ENCODE measurements at regions of chr14 and their contacts with region 1.

Region 1: GRCh38 chr14:55270832-55271565 is at the start of gene FBXO34:
- DNase-seq: peak; percentile 90
- H3K4me3 ChIP-seq: peak within 1 kb of the TSS; percentile 95
- H3K27ac ChIP-seq: peak within 1 kb of the TSS; percentile 71
- H3K27me3 ChIP-seq: no peaks in the 10 kb centered on the region
- CTCF ChIP-seq: peak; percentile 99
- polyA plus RNA-seq, gene FBXO34: 26.8 and 30.9 TPM in 2 replicates

Region 2: GRCh38 chr14:55212634-55213033 is 58.4 kb before region 1 on chr14:
- CTCF ChIA-PET with region 1: interaction called, 10 read pairs
- POLR2A ChIA-PET with region 1: no interaction called
- DNase-seq: no peak
- H3K4me3 ChIP-seq: no peak overlapping the region
- H3K27ac ChIP-seq: no peak overlapping the region
- H3K27me3 ChIP-seq: no peaks in the 10 kb centered on the region
- CTCF ChIP-seq: no peak

Region 3: DNA sequence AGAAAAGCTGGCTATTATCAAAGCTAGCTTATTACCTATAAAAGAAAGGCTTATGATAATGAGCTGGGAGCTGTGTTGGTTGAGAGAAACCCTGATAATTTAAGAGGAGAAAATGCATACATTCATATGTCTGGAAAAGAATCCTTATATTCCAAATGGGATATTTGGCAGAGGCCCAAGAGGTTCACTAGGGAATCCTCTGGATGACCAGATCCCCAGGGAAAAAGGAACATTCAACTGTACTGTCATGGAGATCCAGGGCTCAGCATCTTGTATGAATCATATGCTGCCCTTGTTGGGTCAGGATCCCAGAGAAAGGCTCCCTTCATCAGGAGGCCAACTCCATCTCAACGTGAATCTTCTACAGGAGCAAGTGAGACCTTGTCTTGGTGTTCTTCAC is 16.4 kb before region 1 on chr14:
- CTCF ChIA-PET with region 1: interaction called, 15 read pairs
- POLR2A ChIA-PET with region 1: no interaction called
- DNase-seq: no peak
- H3K4me3 ChIP-seq: no peak overlapping the region
- H3K27ac ChIP-seq: no peak overlapping the region
- H3K27me3 ChIP-seq: peaks cover 21% of the 10 kb centered on the region
- CTCF ChIP-seq: no peak

Region 4: GRCh38 chr14:55366271-55366670 is 95.3 kb after region 1 on chr14:
- CTCF ChIA-PET with region 1: interaction called, 13 read pairs
- POLR2A ChIA-PET with region 1: no interaction called
- DNase-seq: peak; percentile 43
- H3K4me3 ChIP-seq: no peak overlapping the region
- H3K27ac ChIP-seq: peak overlapping the region; percentile 71
- H3K27me3 ChIP-seq: no peaks in the 10 kb centered on the region
- CTCF ChIP-seq: no peak

Region 5: GRCh38 chr14:55418411-55418810 is 147.4 kb after region 1 on chr14:
- CTCF ChIA-PET with region 1: interaction called, 18 read pairs
- POLR2A ChIA-PET with region 1: no interaction called
- DNase-seq: no peak
- H3K4me3 ChIP-seq: no peak overlapping the region
- H3K27ac ChIP-seq: no peak overlapping the region
- H3K27me3 ChIP-seq: no peaks in the 10 kb centered on the region
- CTCF ChIP-seq: no peak

Measured in AG04450 (cell line).